K562 (cell line): ENCODE measurements at regions of chr15 and their contacts with region 1.

Region 1: DNA sequence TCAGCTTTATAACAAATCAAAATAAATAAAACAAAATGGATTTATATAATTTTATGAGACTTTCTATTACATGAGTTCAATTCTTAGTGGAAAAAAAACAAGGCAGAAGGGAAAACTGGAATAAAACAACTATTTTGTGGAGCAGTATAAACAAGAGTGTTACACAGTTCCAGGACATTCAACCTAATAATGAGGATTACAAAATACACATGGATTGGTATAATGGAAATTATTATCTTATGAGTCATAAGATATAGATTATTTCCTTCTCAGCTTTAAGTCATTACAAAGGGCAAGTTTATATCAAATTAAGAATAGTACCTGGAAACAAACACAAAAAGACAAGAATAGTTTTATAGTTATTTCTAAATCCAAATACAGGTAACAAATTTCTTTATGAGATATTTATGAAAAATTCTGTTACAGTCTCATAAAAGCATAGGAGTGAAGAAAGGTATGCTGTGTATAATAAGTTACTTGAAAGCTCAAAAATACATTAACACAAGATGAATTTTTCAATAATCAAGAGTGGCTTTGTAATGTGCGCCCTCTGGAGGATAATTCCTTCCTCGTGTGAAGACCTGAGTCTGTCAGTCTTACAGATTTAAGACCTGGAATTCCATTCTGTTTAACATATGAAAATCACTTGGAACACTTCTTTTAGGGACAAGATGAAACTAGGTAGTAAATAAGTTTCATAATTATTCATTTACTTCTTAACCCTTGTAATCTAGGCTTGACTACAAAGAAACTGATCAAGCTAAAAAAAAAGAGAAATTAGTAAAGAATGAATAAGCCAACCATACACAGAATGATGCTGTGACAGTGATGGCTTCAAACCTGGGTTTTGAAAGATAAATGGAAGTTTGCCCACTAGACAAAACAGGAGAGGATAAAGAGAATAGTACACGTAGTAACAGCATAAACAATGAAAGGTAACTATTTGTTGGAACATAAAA is 9.5 kb downstream of the COPS2 start:
- DNase-seq: peak in 3 of 4 experiments; percentile 17 to 63 (median 30)
- ATAC-seq: peak; percentile 79
- H3K4me3 ChIP-seq: no peak overlapping the region
- H3K27ac ChIP-seq: 0 out of 3 replicates have a peak overlapping the region, but pooled peaks have one; percentile 11
- H3K4me1 ChIP-seq: no peaks in the 10 kb centered on the region; a peak in 2 of 5 replicates
- H3K27me3 ChIP-seq: no peaks in the 10 kb centered on the region
- CTCF ChIP-seq: peak; percentile 41 to 66 (median 44); a peak in 5 of 6 replicates
- EP300 ChIP-seq: no peak
- POLR2A ChIP-seq: no peak
- RAD21 ChIP-seq: peak; percentile 50 to 59

Region 2: DNA sequence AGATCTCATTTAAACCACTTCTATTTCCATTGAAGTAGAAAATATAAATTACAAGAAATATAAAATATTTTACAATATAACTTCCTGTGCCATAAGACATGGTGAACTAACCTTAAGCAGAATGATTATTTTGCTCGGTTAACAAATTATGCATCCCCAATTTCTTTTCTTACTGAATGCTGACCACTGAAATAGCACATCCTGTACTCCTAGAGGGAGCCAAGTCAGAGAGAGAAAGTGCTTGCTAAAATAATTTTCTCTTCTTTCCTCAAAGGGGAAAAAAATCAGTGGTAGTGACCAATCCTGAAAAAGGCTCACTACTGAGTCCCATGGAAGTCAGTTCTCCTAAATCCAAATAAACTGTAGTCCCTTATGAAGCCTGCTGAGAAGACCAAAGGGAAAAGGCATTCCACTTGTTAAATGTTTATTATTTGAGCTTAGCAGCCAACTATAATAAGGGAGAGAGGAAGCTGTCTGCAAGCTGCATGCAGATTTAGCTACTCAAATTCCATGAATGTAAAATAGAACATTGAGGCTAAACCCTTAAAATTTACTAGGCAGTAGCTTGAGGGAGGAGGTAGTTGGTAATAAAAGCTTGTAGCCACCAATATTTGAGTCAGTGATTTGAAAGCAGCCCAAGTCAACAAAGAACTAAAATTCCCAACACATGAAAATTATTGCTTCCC is 368.1 kb before region 1 on chr15:
- CTCF ChIA-PET with region 1: no interaction called
- POLR2A ChIA-PET with region 1: no interaction called
- in situ Hi-C with region 1: no loop called
- intact Hi-C with region 1: no loop called
- DNase-seq: no peak
- ATAC-seq: no peak
- H3K4me3 ChIP-seq: no peak overlapping the region
- H3K27ac ChIP-seq: no peak overlapping the region
- H3K4me1 ChIP-seq: no peaks in the 10 kb centered on the region
- H3K27me3 ChIP-seq: no peaks in the 10 kb centered on the region
- CTCF ChIP-seq: no peak
- EP300 ChIP-seq: no peak
- POLR2A ChIP-seq: no peak
- RAD21 ChIP-seq: no peak

Region 3: GRCh38 chr15:48984811-48985352 is 161.0 kb before region 1 on chr15:
- CTCF ChIA-PET with region 1: no interaction called
- POLR2A ChIA-PET with region 1: no interaction called
- in situ Hi-C with region 1: no loop called
- intact Hi-C with region 1: loop called (anchors 5 kb)
- DNase-seq: no peak
- ATAC-seq: no peak
- H3K4me3 ChIP-seq: no peak overlapping the region
- H3K27ac ChIP-seq: no peak overlapping the region
- H3K4me1 ChIP-seq: no peaks in the 10 kb centered on the region; a peak in 1 of 5 replicates
- H3K27me3 ChIP-seq: no peaks in the 10 kb centered on the region
- CTCF ChIP-seq: no peak
- EP300 ChIP-seq: no peak
- POLR2A ChIP-seq: no peak
- RAD21 ChIP-seq: no peak

Region 4: DNA sequence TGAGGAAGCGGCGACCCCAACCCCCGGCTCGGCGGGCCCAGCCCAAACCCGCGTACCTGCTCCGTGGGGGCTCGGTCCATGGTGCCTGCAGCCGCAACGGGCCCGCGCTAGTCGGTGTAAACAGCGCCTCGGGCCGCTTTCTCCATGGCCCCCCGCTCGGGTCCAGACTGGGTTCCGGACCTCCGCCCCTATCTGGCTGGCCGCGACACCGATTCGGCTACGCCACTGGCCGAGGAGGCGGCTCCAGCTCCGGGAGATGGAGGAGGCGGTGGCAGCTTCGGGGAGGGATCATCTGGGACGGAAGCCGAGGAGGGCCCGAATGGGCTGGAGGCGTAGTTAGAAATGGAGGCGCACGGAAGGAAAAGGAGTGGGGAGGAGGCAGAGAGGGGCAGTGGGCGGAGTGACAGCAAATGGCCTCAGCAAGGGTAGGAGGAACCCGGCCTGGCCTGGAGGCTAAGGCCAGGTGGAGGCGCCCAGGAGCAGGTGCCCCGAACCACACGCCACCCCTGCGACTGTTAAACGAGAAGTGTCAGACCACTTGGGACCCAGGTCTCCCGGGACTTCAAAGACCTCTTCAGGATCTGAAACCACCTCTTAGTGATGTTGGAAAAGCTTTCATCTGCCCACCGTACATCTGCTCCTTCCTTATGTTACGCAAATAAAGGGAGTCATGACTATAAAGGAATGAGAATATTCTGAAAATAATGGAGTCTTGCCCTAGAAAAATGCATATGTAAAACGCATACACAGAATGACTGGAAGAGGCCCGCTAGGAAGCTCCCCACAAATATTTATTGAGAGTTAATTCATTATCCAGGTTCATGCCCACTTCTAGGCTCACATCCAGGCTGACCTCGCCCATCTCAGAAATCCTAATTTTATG is 99.5 kb before region 1 on chr15 and contains the start of gene SECISBP2L:
- CTCF ChIA-PET with region 1: interaction called, 3 read pairs
- POLR2A ChIA-PET with region 1: no interaction called
- in situ Hi-C with region 1: no loop called
- intact Hi-C with region 1: loop called (anchors 5 kb)
- DNase-seq: peak; percentile 90 to 96 (median 92)
- ATAC-seq: peak; percentile 96
- H3K4me3 ChIP-seq: peak within 1 kb of the TSS; percentile 92
- H3K27ac ChIP-seq: peak within 1 kb of the TSS; percentile 82
- H3K4me1 ChIP-seq: peaks cover 8 to 10% of the 10 kb centered on the region in 2 experiments; a peak in 4 of 5 replicates
- H3K27me3 ChIP-seq: no peaks in the 10 kb centered on the region
- CTCF ChIP-seq: peak; percentile 66 to 73 (median 68)
- EP300 ChIP-seq: peak; percentile 57
- POLR2A ChIP-seq: peak; percentile 77
- RAD21 ChIP-seq: peak; percentile 47 to 66
- polyA plus RNA-seq, gene SECISBP2L: 0.55 to 1.1 TPM

Region 5: GRCh38 chr15:49225613-49226281 is 79.8 kb after region 1 on chr15:
- CTCF ChIA-PET with region 1: interaction called, 3 read pairs
- POLR2A ChIA-PET with region 1: no interaction called
- in situ Hi-C with region 1: no loop called
- intact Hi-C with region 1: loop called (anchors 2 kb)
- DNase-seq: peak; percentile 14 to 87 (median 48)
- ATAC-seq: peak; percentile 98
- H3K4me3 ChIP-seq: no peak overlapping the region; the same call in 1 of the 2 replicates
- H3K27ac ChIP-seq: peak overlapping the region; percentile 60
- H3K4me1 ChIP-seq: peaks cover 7 to 11% of the 10 kb centered on the region in 2 experiments; a peak in 4 of 5 replicates
- H3K27me3 ChIP-seq: no peaks in the 10 kb centered on the region
- CTCF ChIP-seq: peak; percentile 68 to 83 (median 79)
- EP300 ChIP-seq: no peak
- POLR2A ChIP-seq: no peak
- RAD21 ChIP-seq: peak; percentile 59 to 81